CD8-positive, alpha-beta T cell (primary cell): ENCODE measurements at regions of chr1 and their contacts with region 1.

Region 1: DNA sequence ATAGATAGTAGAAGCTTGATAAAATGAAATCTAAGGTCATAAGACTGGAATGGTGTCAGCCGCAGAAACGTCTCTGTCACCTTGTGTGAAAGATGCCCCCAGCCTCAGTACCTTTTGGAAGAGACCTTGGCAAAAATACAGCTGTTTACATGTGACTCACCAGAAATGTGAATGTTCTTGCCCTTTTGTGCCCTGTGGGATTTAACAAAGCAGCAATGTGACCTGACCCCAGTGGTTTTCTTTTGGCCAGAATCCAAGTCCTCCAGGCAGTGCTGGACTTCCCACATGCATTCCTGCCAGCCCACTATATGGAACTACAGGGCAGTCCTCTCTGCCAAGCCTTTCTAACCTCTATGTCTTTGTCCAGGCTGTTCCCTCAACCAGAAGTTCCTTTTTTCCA is 27.2 kb upstream of the LRRC8C start:
- DNase-seq: no peak
- ATAC-seq: no peak
- H3K4me3 ChIP-seq: no peak overlapping the region
- H3K4me3 Mint-ChIP-seq: peak overlapping the region; percentile 46
- H3K27ac ChIP-seq: peak overlapping the region in 1 of 2 experiments; percentile 73
- H3K27ac Mint-ChIP-seq: peak overlapping the region; percentile 100
- H3K4me1 ChIP-seq: peaks cover 94% of the 10 kb centered on the region
- H3K4me1 Mint-ChIP-seq: peaks cover 92% of the 10 kb centered on the region
- H3K27me3 ChIP-seq: no peaks in the 10 kb centered on the region
- H3K27me3 Mint-ChIP-seq: no peaks in the 10 kb centered on the region
- CTCF ChIP-seq: no peak

Region 2: GRCh38 chr1:89125913-89126580 is 479.6 kb before region 1 on chr1 and contains the start of gene GBP2:
- CTCF ChIA-PET with region 1: no interaction called
- POLR2A ChIA-PET with region 1: no interaction called
- intact Hi-C with region 1: loop called in 1 of 2 experiments (anchors 5 kb)
- DNase-seq: peak in 5 of 9 experiments; percentile 24 to 77 (median 44)
- ATAC-seq: peak; percentile 74
- H3K4me3 ChIP-seq: peak within 1 kb of the TSS; percentile 59 to 75
- H3K4me3 Mint-ChIP-seq: peak within 1 kb of the TSS; percentile 97
- H3K27ac ChIP-seq: peak within 1 kb of the TSS; percentile 59 to 78
- H3K27ac Mint-ChIP-seq: peak within 1 kb of the TSS; percentile 99
- H3K4me1 ChIP-seq: peaks cover 39% of the 10 kb centered on the region
- H3K4me1 Mint-ChIP-seq: peaks cover 66% of the 10 kb centered on the region
- H3K27me3 ChIP-seq: no peaks in the 10 kb centered on the region
- H3K27me3 Mint-ChIP-seq: no peaks in the 10 kb centered on the region
- CTCF ChIP-seq: no peak
- total RNA-seq, gene GBP2: 120 to 125 TPM

Region 3: DNA sequence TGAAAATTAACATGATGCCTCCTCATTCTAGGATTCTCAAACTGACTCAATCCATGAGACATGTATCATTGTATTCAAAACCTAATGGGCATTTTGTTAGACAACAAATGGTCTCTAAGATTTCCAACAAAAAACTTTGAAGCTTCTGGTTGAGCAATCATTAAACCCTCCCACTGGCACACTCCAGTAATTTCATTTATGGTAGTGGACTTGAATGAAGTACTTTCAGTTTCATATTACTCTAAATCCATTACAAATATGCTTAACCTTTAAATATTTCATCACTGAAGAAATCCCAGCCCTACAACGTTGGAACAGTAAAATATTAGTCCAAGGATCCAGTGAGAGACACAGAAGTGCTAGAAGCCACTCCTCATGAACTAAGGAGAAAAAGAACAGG is 198.3 kb before region 1 on chr1:
- CTCF ChIA-PET with region 1: no interaction called
- POLR2A ChIA-PET with region 1: no interaction called
- intact Hi-C with region 1: no loop called
- DNase-seq: peak in 2 of 9 experiments; percentile 7 to 22
- ATAC-seq: no peak
- H3K4me3 ChIP-seq: peak overlapping the region; percentile 24 to 38
- H3K4me3 Mint-ChIP-seq: peak overlapping the region; percentile 85
- H3K27ac ChIP-seq: no peak overlapping the region
- H3K27ac Mint-ChIP-seq: peak overlapping the region; percentile 63
- H3K4me1 ChIP-seq: peaks cover 15% of the 10 kb centered on the region
- H3K4me1 Mint-ChIP-seq: peaks cover 27% of the 10 kb centered on the region
- H3K27me3 ChIP-seq: no peaks in the 10 kb centered on the region
- H3K27me3 Mint-ChIP-seq: no peaks in the 10 kb centered on the region
- CTCF ChIP-seq: no peak

Region 4: DNA sequence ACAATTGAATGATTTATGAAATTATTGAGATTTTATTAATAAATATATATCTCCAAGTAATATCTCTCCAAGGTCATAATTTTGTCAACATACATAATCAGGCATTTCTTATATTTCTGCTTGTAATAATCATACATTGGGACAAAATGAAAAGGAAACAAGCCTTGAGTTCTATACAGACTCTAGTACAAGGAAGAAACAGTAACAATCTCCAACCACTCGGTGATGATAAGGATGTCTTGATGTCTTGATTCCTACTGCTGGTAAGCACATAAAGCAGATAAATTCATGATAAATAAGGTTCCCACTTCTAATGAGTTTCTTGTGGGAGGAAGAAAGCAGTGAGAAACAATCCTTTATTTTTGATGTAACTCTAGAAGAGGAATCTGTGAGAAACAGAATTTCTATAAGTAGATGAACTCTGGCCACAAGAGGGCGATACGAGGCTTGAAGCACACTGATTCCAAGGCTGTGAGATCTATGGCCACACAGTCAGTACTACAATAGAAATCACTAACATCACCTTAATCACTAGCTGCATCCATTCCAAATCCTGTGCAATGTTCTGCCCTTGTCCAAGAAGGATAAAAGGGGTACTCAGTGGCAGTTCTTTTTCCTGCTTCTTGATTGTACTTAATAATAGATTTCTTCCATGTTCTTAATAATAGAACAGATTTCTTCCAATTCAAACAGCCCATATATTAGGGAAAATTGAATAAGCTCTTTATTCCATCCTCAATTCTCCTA is 122.5 kb before region 1 on chr1:
- CTCF ChIA-PET with region 1: interaction called, 11 read pairs
- POLR2A ChIA-PET with region 1: interaction called, 3 read pairs
- intact Hi-C with region 1: no loop called
- DNase-seq: peak; percentile 48 to 85 (median 79)
- ATAC-seq: peak; percentile 92
- H3K4me3 ChIP-seq: no peak overlapping the region
- H3K4me3 Mint-ChIP-seq: no peak overlapping the region
- H3K27ac ChIP-seq: no peak overlapping the region
- H3K27ac Mint-ChIP-seq: no peak overlapping the region
- H3K4me1 ChIP-seq: no peaks in the 10 kb centered on the region
- H3K4me1 Mint-ChIP-seq: peaks cover 9% of the 10 kb centered on the region
- H3K27me3 ChIP-seq: no peaks in the 10 kb centered on the region
- H3K27me3 Mint-ChIP-seq: peaks cover 4% of the 10 kb centered on the region
- CTCF ChIP-seq: peak; percentile 72

Region 5: GRCh38 chr1:89524369-89525168 is 81.1 kb before region 1 on chr1 and contains the start of gene LRRC8B:
- CTCF ChIA-PET with region 1: interaction called, 7 read pairs
- POLR2A ChIA-PET with region 1: interaction called, 21 read pairs
- intact Hi-C with region 1: loop called in 1 of 2 experiments (anchors 1 kb)
- DNase-seq: peak; percentile 73 to 94 (median 86)
- ATAC-seq: peak; percentile 80
- H3K4me3 ChIP-seq: peak within 1 kb of the TSS; percentile 92 to 98
- H3K4me3 Mint-ChIP-seq: no peak within 1 kb of the TSS
- H3K27ac ChIP-seq: peak within 1 kb of the TSS; percentile 81 to 91
- H3K27ac Mint-ChIP-seq: peak within 1 kb of the TSS; percentile 90
- H3K4me1 ChIP-seq: peaks cover 38% of the 10 kb centered on the region
- H3K4me1 Mint-ChIP-seq: peaks cover 25% of the 10 kb centered on the region
- H3K27me3 ChIP-seq: no peaks in the 10 kb centered on the region
- H3K27me3 Mint-ChIP-seq: no peaks in the 10 kb centered on the region
- CTCF ChIP-seq: no peak
- total RNA-seq, gene LRRC8B: 11.8 to 14.5 TPM

Region 6: DNA sequence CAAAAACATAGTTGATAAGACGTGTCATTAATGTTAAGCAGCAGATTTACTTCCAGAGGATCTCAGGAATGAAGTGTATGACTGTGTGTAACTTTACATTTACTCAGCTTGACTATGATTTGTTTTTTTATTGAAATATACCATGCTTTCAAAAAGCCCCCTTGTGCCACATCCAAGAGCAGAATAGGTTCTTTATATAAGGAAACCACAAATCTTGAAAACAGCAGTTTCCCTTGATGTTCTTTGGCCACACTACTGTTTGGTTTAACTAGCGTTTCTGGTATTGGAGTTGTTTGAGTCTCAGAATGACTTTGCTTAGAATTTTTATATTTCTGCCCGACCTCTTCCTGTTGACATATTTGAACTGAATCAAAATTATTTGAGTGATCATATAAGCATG is 52.2 kb after region 1 on chr1:
- CTCF ChIA-PET with region 1: interaction called, 4 read pairs
- POLR2A ChIA-PET with region 1: interaction called, 20 read pairs
- intact Hi-C with region 1: no loop called
- DNase-seq: peak in 3 of 9 experiments; percentile 47 to 87 (median 75)
- ATAC-seq: peak; percentile 74
- H3K4me3 ChIP-seq: no peak overlapping the region
- H3K4me3 Mint-ChIP-seq: peak overlapping the region; percentile 51
- H3K27ac ChIP-seq: peak overlapping the region; percentile 21 to 58
- H3K27ac Mint-ChIP-seq: peak overlapping the region; percentile 88
- H3K4me1 ChIP-seq: peaks cover 73% of the 10 kb centered on the region
- H3K4me1 Mint-ChIP-seq: peaks cover 92% of the 10 kb centered on the region
- H3K27me3 ChIP-seq: no peaks in the 10 kb centered on the region
- H3K27me3 Mint-ChIP-seq: no peaks in the 10 kb centered on the region
- CTCF ChIP-seq: no peak

Region 7: GRCh38 chr1:89757532-89757931 is 151.8 kb after region 1 on chr1:
- CTCF ChIA-PET with region 1: interaction called, 78 read pairs
- POLR2A ChIA-PET with region 1: interaction called, 21 read pairs
- intact Hi-C with region 1: loop called in 1 of 2 experiments (anchors 2 kb)
- DNase-seq: peak in 8 of 9 experiments; percentile 13 to 73 (median 38)
- ATAC-seq: peak; percentile 68
- H3K4me3 ChIP-seq: peak overlapping the region; percentile 2 to 32
- H3K4me3 Mint-ChIP-seq: peak overlapping the region; percentile 74
- H3K27ac ChIP-seq: peak overlapping the region; percentile 11 to 67
- H3K27ac Mint-ChIP-seq: peak overlapping the region; percentile 92
- H3K4me1 ChIP-seq: peaks cover 74% of the 10 kb centered on the region
- H3K4me1 Mint-ChIP-seq: peaks cover 88% of the 10 kb centered on the region
- H3K27me3 ChIP-seq: no peaks in the 10 kb centered on the region
- H3K27me3 Mint-ChIP-seq: no peaks in the 10 kb centered on the region
- CTCF ChIP-seq: no peak

Region 8: GRCh38 chr1:89833183-89834082 is 227.7 kb after region 1 on chr1:
- CTCF ChIA-PET with region 1: no interaction called
- POLR2A ChIA-PET with region 1: no interaction called
- intact Hi-C with region 1: no loop called
- DNase-seq: no peak
- ATAC-seq: no peak
- H3K4me3 ChIP-seq: no peak overlapping the region
- H3K4me3 Mint-ChIP-seq: no peak overlapping the region
- H3K27ac ChIP-seq: no peak overlapping the region
- H3K27ac Mint-ChIP-seq: no peak overlapping the region
- H3K4me1 ChIP-seq: no peaks in the 10 kb centered on the region
- H3K4me1 Mint-ChIP-seq: peaks cover 22% of the 10 kb centered on the region
- H3K27me3 ChIP-seq: no peaks in the 10 kb centered on the region
- H3K27me3 Mint-ChIP-seq: no peaks in the 10 kb centered on the region
- CTCF ChIP-seq: no peak

Region 9: GRCh38 chr1:89994805-89995597 is 389.3 kb after region 1 on chr1 and contains the start of gene ZNF326:
- CTCF ChIA-PET with region 1: no interaction called
- POLR2A ChIA-PET with region 1: no interaction called
- intact Hi-C with region 1: loop called in 1 of 2 experiments (anchors 10 kb)
- DNase-seq: peak; percentile 89 to 96 (median 93)
- ATAC-seq: peak; percentile 97
- H3K4me3 ChIP-seq: peak within 1 kb of the TSS; percentile 72 to 93
- H3K4me3 Mint-ChIP-seq: peak within 1 kb of the TSS; percentile 99
- H3K27ac ChIP-seq: peak within 1 kb of the TSS; percentile 78 to 82
- H3K27ac Mint-ChIP-seq: peak within 1 kb of the TSS; percentile 96
- H3K4me1 ChIP-seq: peaks cover 25% of the 10 kb centered on the region
- H3K4me1 Mint-ChIP-seq: peaks cover 35% of the 10 kb centered on the region
- H3K27me3 ChIP-seq: no peaks in the 10 kb centered on the region
- H3K27me3 Mint-ChIP-seq: no peaks in the 10 kb centered on the region
- CTCF ChIP-seq: no peak
- total RNA-seq, gene ZNF326: 55.5 to 59.1 TPM